HepG2 (cell line): ENCODE measurements at regions of chr4 and their contacts with region 1.

Region 1: GRCh38 chr4:150056569-150056968 is 21.7 kb upstream of the DCLK2 start:
- DNase-seq: no peak
- ATAC-seq: no peak
- H3K4me3 ChIP-seq: no peak overlapping the region
- H3K27ac ChIP-seq: no peak overlapping the region
- H3K4me1 ChIP-seq: no peaks in the 10 kb centered on the region
- H3K27me3 ChIP-seq: no peaks in the 10 kb centered on the region; a peak in 2 of 5 replicates
- CTCF ChIP-seq: no peak
- EP300 ChIP-seq: no peak
- POLR2A ChIP-seq: no peak
- RAD21 ChIP-seq: no peak

Region 2: GRCh38 chr4:150033901-150034300 is 22.7 kb before region 1 on chr4:
- CTCF ChIA-PET with region 1: no interaction called
- POLR2A ChIA-PET with region 1: no interaction called
- in situ Hi-C with region 1: no loop called
- intact Hi-C with region 1: loop called (anchors 1 kb)
- DNase-seq: no peak
- ATAC-seq: no peak
- H3K4me3 ChIP-seq: no peak overlapping the region
- H3K27ac ChIP-seq: no peak overlapping the region
- H3K4me1 ChIP-seq: no peaks in the 10 kb centered on the region
- H3K27me3 ChIP-seq: no peaks in the 10 kb centered on the region; a peak in 1 of 5 replicates
- CTCF ChIP-seq: no peak
- EP300 ChIP-seq: no peak
- POLR2A ChIP-seq: no peak
- RAD21 ChIP-seq: no peak

Region 3: GRCh38 chr4:150078637-150079581 is 22.3 kb after region 1 on chr4:
- CTCF ChIA-PET with region 1: no interaction called
- POLR2A ChIA-PET with region 1: no interaction called
- in situ Hi-C with region 1: no loop called
- intact Hi-C with region 1: no loop called
- DNase-seq: no peak
- ATAC-seq: peak; percentile 49
- H3K4me3 ChIP-seq: peak overlapping the region in 1 of 3 experiments; percentile 33; a peak in 2 of 6 replicates
- H3K27ac ChIP-seq: no peak overlapping the region
- H3K4me1 ChIP-seq: peaks cover 11% of the 10 kb centered on the region
- H3K27me3 ChIP-seq: peaks cover 1 to 7% of the 10 kb centered on the region in 2 experiments; a peak in 1 of 5 replicates
- CTCF ChIP-seq: no peak
- EP300 ChIP-seq: no peak
- POLR2A ChIP-seq: no peak
- RAD21 ChIP-seq: no peak